Colonic mucosa (tissue), 4 donors: ENCODE measurements at regions of chr9 and their contacts with region 1.

Region 1: DNA sequence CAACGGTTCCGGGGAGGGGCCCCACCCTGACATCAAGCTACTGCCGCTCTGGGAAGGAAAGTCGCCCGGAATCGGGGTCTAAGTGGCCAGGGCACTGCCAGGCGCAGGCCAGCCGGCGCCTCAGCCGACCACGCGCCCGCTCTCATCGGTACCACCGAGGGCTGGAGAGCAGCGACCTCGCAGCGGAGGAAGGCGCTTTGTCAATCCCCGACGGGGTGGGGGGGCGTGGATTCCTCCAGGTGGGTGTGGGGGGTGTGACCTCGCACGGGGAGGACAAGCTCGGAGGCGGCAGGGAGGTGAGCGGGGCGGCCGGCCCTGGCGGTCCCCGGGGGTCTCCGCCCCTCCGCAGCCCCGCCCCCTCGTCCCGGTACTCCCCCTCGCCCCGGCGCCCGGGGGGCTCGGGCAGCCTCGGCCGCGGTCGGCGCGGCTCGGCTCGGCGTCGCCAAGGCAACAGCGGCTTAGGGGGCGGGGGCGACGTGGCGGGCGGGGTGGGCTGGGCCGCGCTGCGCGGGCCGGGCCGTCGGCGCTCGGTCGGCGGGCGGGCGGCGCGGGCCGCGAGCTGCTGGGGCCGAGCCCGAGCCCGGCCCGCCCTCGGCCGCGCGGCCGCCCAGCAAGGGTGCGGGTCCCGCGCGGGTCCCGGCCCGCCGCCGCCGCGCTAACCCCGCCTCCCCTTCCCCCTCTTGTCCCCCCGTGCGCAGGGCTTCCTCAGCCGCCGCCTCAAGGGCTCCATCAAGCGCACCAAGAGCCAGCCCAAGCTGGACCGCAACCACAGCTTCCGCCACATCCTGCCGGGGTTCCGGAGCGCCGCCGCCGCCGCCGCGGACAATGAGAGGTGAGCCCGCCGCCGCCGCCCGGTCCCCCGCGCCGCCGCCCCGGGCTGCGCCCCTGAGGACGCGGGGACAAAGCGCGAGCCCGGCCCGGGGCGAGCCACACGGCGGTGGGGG is 47.5 kb downstream of the DAB2IP start:
- DNase-seq: peak; percentile 52
- H3K4me3 ChIP-seq: peak overlapping the region; percentile 43
- H3K27ac ChIP-seq: peak overlapping the region; percentile 27
- H3K4me1 ChIP-seq: peaks cover 3% of the 10 kb centered on the region
- H3K27me3 ChIP-seq: no peaks in the 10 kb centered on the region
- CTCF ChIP-seq: no peak

Region 2: GRCh38 chr9:121861501-121862180 is 162.7 kb after region 1 on chr9:
- intact Hi-C with region 1: loop called (anchors 10 kb)
- DNase-seq: peak; percentile 36
- H3K4me3 ChIP-seq: no peak overlapping the region
- H3K27ac ChIP-seq: no peak overlapping the region
- H3K4me1 ChIP-seq: no peaks in the 10 kb centered on the region
- H3K27me3 ChIP-seq: no peaks in the 10 kb centered on the region
- CTCF ChIP-seq: no peak